ENCODE measurements at regions of chr1 and their contacts with region 1.

Region 1: DNA sequence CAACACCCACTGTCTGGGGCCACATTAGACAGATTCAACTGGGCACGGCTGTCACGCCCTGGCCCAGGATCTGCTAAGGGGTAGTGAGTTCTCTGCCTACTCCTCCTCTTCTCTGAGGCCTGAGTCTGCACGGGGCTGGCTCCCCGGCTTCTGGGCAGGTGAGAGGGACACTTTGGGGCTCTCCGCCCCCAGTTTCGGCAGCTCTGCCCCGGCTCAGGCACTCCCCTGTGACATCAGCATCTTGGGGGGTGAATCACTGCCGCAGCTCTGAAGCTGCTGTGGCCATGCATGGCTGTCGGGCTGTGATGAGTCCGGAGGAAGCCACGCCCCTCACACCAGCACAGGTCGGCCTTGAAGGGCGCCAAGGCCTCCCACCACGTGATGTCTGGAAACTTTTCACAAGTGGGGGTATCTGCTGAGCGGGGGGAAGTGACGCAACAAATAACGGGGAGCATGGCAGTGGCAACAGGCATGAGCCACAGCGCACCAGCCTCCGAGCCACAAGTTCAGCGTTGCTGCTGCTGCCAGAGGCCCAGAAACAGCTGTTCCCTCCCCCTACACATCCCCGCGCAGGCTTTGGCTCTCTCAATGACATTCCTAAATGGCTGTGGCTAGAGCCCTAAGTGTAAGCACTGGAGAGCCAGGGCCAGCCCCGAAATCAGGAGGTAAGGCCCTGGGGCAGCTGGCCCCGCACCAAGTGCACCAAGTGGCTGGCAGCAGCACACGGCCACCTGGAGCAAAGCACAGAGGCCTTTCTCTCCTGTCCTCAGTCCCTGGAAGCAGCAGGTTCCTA is 26.3 kb downstream of the ZBTB17 start:
- DNase-seq: peak; percentile 90
- ATAC-seq: peak; percentile 82

Region 2: DNA sequence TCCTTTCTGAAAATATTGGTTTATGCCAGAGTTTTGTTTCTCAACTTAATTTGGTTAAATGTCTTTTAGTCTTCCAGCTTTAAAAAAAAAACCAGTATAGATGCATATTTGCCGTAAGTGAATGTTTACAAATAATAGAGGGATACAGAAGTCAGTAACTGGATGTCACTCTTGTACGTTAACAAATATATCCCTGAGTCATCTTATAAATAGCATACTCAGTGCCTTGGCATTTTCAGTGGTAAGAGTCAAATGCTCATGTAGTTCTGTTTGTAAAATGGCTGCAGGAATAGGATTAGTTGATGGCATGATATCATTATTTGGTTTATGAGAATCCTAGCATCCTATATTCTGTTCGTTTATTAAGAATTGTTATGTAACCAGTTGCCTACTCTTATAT is 46.8 kb before region 1 on chr1:
- intact Hi-C with region 1: loop called (anchors 5 kb)
- DNase-seq: no peak
- ATAC-seq: peak; percentile 48

Region 3: DNA sequence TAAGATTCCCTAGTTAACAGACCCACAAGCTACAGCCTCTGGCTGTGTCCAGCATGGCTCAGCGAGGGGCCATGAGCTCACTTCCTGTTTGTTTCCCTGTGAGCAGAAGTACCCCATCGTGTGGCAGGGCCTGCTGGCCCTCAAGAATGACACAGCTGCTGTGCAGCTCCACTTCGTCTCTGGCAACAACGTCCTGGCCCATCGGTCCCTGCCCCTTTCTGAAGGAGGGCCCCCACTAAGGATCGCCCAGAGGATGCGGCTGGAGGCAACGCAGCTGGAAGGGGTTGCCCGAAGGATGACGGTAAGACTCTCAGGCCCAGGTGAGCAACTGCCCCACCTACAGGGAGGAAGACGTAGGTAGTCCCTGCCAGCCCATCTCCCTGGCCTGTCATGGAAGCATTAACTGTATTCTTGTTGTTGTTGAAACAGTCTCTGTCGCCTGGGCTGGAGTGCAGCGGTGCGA is 11.9 kb before region 1 on chr1:
- intact Hi-C with region 1: no loop called
- DNase-seq: no peak
- ATAC-seq: no peak

Measured in Right ventricle myocardium inferior (tissue), 1 donor.